ENCODE measurements at regions of chr1 and their contacts with region 1.

Region 1: GRCh38 chr1:51296383-51297357 is 33.7 kb downstream of the TTC39A start:
- DNase-seq: peak; percentile 88
- ATAC-seq: peak; percentile 85
- H3K4me3 Mint-ChIP-seq: peak overlapping the region; percentile 61
- H3K27ac Mint-ChIP-seq: peak overlapping the region; percentile 33
- H3K4me1 Mint-ChIP-seq: peaks cover 11% of the 10 kb centered on the region
- H3K27me3 Mint-ChIP-seq: no peaks in the 10 kb centered on the region

Region 2: DNA sequence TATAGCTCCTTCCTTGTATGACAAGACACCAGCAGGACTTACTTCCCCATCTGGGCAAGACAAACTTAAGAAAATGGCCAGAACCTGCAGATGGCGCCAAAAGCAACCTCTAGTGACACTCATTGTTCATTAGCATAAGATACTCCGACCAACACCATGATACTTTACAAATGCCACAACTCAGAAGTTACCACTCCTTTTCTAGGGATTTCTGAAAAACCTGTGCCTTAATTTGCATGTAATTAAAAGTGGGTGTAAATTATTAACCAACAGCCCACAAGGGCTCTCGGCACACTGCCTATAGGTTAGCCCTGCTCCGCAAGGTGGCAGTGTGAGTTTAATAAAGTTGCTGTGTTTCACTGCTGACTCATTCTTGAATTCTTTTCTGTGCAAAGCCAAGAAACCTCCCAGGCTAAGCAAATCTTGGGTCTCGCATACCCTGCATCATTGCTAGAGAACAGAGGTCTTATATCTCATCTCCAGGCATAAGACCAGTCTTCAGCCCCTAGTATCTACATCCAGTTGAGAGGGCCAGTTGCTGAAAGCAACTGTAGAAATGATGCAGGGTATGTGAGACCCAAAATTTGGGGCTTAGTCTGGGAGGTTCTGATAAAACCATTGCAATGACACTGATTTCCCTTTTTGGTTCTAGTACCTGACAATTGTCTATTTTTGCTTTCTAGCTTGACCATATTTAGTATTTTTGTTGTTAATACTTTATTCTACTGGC is 423.0 kb before region 1 on chr1:
- CTCF ChIA-PET with region 1: no interaction called
- POLR2A ChIA-PET with region 1: no interaction called
- intact Hi-C with region 1: loop called in 1 of 2 experiments (anchors 10 kb)
- DNase-seq: peak; percentile 83
- ATAC-seq: peak; percentile 93
- H3K4me3 Mint-ChIP-seq: peak overlapping the region; percentile 42
- H3K27ac Mint-ChIP-seq: no peak overlapping the region
- H3K4me1 Mint-ChIP-seq: peaks cover 9% of the 10 kb centered on the region
- H3K27me3 Mint-ChIP-seq: no peaks in the 10 kb centered on the region

Region 3: DNA sequence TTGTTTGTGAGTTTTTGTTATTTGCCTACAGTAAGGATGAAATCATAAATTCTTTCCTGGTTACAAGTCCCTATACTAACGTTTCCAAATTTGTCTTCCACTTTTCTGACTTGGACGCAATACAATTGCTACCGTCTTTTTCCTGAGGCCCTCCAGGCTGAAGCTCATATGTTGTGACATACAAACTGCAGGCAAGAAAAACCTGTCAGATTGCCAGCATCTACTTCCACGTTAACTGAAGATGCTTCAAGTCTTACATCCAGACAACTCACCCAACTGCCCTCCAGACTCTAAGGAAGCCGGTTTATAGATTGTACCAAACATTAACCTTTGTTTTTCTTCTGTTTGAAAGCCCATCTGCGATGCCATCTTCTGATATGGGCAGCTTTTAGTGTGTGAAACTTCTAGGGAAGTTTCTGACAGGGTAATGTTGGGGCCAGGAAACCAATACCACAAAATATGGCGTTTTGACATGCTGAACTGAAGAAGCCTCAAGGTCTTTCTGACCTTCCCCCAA is 82.0 kb before region 1 on chr1:
- CTCF ChIA-PET with region 1: no interaction called
- POLR2A ChIA-PET with region 1: no interaction called
- intact Hi-C with region 1: loop called (anchors 5 kb)
- DNase-seq: peak; percentile 15
- ATAC-seq: peak; percentile 72
- H3K4me3 Mint-ChIP-seq: no peak overlapping the region
- H3K27ac Mint-ChIP-seq: peak overlapping the region; percentile 59
- H3K4me1 Mint-ChIP-seq: peaks cover 22% of the 10 kb centered on the region
- H3K27me3 Mint-ChIP-seq: no peaks in the 10 kb centered on the region

Region 4: GRCh38 chr1:51235673-51236530 is 60.8 kb before region 1 on chr1 and contains the start of gene RNF11:
- CTCF ChIA-PET with region 1: interaction called, 3 read pairs
- POLR2A ChIA-PET with region 1: no interaction called
- intact Hi-C with region 1: loop called (anchors 1 to 2 kb)
- DNase-seq: peak; percentile 97
- ATAC-seq: peak; percentile 93
- H3K4me3 Mint-ChIP-seq: peak within 1 kb of the TSS; percentile 79
- H3K27ac Mint-ChIP-seq: peak within 1 kb of the TSS; percentile 90
- H3K4me1 Mint-ChIP-seq: peaks cover 29% of the 10 kb centered on the region
- H3K27me3 Mint-ChIP-seq: no peaks in the 10 kb centered on the region
- total RNA-seq, gene RNF11: 20.6 to 26.0 TPM

Region 5: GRCh38 chr1:51433269-51433971 is 136.8 kb after region 1 on chr1:
- CTCF ChIA-PET with region 1: no interaction called
- POLR2A ChIA-PET with region 1: no interaction called
- intact Hi-C with region 1: no loop called
- DNase-seq: no peak
- ATAC-seq: no peak
- H3K4me3 Mint-ChIP-seq: no peak overlapping the region
- H3K27ac Mint-ChIP-seq: peak overlapping the region; percentile 45
- H3K4me1 Mint-ChIP-seq: peaks cover 24% of the 10 kb centered on the region
- H3K27me3 Mint-ChIP-seq: no peaks in the 10 kb centered on the region